CD8-positive, alpha-beta T cell (primary cell): ENCODE measurements at regions of chr4 and their contacts with region 1.

Region 1: GRCh38 chr4:142696334-142697122 is 149.6 kb downstream of the INPP4B start:
- DNase-seq: peak in 5 of 9 experiments; percentile 7 to 35 (median 19)
- ATAC-seq: peak; percentile 57
- H3K4me3 ChIP-seq: peak overlapping the region in 1 of 2 experiments; percentile 6
- H3K4me3 Mint-ChIP-seq: peak overlapping the region; percentile 65
- H3K27ac ChIP-seq: peak overlapping the region; percentile 14 to 27
- H3K27ac Mint-ChIP-seq: peak overlapping the region; percentile 95
- H3K4me1 ChIP-seq: peaks cover 57% of the 10 kb centered on the region
- H3K4me1 Mint-ChIP-seq: peaks cover 58% of the 10 kb centered on the region
- H3K27me3 ChIP-seq: no peaks in the 10 kb centered on the region
- H3K27me3 Mint-ChIP-seq: no peaks in the 10 kb centered on the region
- CTCF ChIP-seq: no peak

Region 2: GRCh38 chr4:142222127-142222526 is 474.4 kb before region 1 on chr4:
- CTCF ChIA-PET with region 1: no interaction called
- POLR2A ChIA-PET with region 1: no interaction called
- intact Hi-C with region 1: no loop called
- DNase-seq: no peak
- ATAC-seq: no peak
- H3K4me3 ChIP-seq: no peak overlapping the region
- H3K4me3 Mint-ChIP-seq: no peak overlapping the region
- H3K27ac ChIP-seq: no peak overlapping the region
- H3K27ac Mint-ChIP-seq: no peak overlapping the region
- H3K4me1 ChIP-seq: no peaks in the 10 kb centered on the region
- H3K4me1 Mint-ChIP-seq: peaks cover 16% of the 10 kb centered on the region
- H3K27me3 ChIP-seq: no peaks in the 10 kb centered on the region
- H3K27me3 Mint-ChIP-seq: no peaks in the 10 kb centered on the region
- CTCF ChIP-seq: no peak

Region 3: DNA sequence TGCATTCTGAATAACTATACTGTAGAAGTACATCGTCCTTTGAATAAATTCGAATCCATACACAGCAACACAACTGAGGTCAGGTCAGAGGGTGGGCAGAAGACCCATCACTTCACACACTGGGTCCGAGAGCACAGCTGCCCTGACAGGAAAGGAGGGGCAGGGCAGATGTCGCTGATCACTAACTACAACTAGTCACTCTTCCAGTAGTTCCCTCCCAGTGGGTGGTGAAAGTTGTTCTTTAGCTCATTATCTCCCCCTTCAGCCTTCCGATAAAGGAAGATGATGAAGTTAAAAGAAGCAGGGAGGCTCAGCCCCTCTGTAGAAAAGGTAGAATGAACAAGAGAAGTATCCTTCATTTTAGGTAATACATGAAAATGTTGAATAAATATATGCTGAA is 129.3 kb before region 1 on chr4:
- CTCF ChIA-PET with region 1: no interaction called
- POLR2A ChIA-PET with region 1: no interaction called
- intact Hi-C with region 1: loop called in 1 of 2 experiments (anchors 1 kb)
- DNase-seq: peak in 8 of 9 experiments; percentile 10 to 78 (median 37)
- ATAC-seq: peak; percentile 70
- H3K4me3 ChIP-seq: peak overlapping the region; percentile 17 to 45
- H3K4me3 Mint-ChIP-seq: peak overlapping the region; percentile 74
- H3K27ac ChIP-seq: peak overlapping the region; percentile 53 to 64
- H3K27ac Mint-ChIP-seq: peak overlapping the region; percentile 84
- H3K4me1 ChIP-seq: peaks cover 10% of the 10 kb centered on the region
- H3K4me1 Mint-ChIP-seq: peaks cover 29% of the 10 kb centered on the region
- H3K27me3 ChIP-seq: no peaks in the 10 kb centered on the region
- H3K27me3 Mint-ChIP-seq: no peaks in the 10 kb centered on the region
- CTCF ChIP-seq: no peak

Region 4: GRCh38 chr4:142579443-142579842 is 117.1 kb before region 1 on chr4:
- CTCF ChIA-PET with region 1: no interaction called
- POLR2A ChIA-PET with region 1: no interaction called
- intact Hi-C with region 1: no loop called
- DNase-seq: no peak
- ATAC-seq: no peak
- H3K4me3 ChIP-seq: no peak overlapping the region
- H3K4me3 Mint-ChIP-seq: no peak overlapping the region
- H3K27ac ChIP-seq: no peak overlapping the region
- H3K27ac Mint-ChIP-seq: no peak overlapping the region
- H3K4me1 ChIP-seq: no peaks in the 10 kb centered on the region
- H3K4me1 Mint-ChIP-seq: peaks cover 3% of the 10 kb centered on the region
- H3K27me3 ChIP-seq: no peaks in the 10 kb centered on the region
- H3K27me3 Mint-ChIP-seq: no peaks in the 10 kb centered on the region
- CTCF ChIP-seq: no peak

Region 5: DNA sequence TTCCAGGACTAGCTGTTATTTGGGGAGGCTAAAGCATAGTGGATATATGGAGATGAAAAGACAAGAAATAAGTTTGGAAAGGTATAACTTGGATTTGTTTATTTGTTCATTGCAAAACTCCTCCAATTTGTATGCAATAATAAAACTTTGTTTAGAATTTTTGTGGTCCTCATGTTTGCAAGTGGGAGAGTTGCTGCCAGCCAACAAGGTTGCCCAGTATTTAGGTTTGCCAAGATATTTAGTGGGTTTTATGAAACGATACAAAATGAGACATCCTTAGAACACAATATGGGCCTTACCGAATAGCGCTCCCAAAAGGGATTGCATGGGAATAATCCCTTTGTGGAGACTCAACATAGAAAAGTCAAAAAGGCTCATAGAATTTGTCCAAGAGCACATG is 12.5 kb before region 1 on chr4:
- CTCF ChIA-PET with region 1: interaction called, 3 read pairs
- POLR2A ChIA-PET with region 1: no interaction called
- intact Hi-C with region 1: loop called in 1 of 2 experiments (anchors 2 kb)
- DNase-seq: no peak
- ATAC-seq: no peak
- H3K4me3 ChIP-seq: no peak overlapping the region
- H3K4me3 Mint-ChIP-seq: no peak overlapping the region
- H3K27ac ChIP-seq: no peak overlapping the region
- H3K27ac Mint-ChIP-seq: no peak overlapping the region
- H3K4me1 ChIP-seq: no peaks in the 10 kb centered on the region
- H3K4me1 Mint-ChIP-seq: no peaks in the 10 kb centered on the region
- H3K27me3 ChIP-seq: no peaks in the 10 kb centered on the region
- H3K27me3 Mint-ChIP-seq: no peaks in the 10 kb centered on the region
- CTCF ChIP-seq: no peak

Region 6: DNA sequence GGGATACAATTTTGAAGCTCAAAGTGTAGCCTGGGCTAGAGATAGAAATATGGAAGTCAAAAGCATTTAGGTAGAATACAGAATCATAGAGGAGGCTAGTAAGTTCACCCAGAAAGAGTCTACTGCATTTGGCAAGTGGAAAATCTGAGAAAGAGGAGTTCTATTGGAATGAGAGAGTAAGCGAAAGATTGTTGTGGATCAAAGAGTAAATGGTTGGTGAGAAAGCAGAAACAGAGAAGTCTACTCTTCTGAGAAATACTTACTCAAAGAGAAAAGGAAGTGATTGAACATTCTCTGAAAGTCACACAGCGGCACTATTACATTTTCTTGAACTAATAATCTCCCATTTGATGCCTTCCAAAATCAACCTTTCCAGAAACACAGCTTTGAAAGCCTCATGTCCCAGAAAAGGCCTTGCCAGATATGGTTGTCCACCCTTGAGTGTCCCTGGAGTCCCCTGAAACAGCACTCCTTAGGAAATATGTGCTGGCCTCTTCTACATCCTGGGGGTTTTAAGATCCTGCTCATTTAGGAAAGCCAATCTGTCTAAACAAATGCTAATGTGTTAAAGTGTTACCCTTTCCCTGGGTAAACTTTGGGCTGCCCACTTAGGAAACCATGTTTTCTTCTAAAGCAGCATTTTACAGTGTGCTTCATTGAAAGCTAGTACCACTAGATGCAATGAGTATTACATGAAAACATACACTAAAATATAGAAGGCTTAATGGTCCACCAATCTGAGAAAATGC is 16.9 kb after region 1 on chr4:
- CTCF ChIA-PET with region 1: interaction called, 4 read pairs
- POLR2A ChIA-PET with region 1: no interaction called
- intact Hi-C with region 1: loop called in 1 of 2 experiments (anchors 2 kb)
- DNase-seq: no peak
- ATAC-seq: no peak
- H3K4me3 ChIP-seq: no peak overlapping the region
- H3K4me3 Mint-ChIP-seq: no peak overlapping the region
- H3K27ac ChIP-seq: no peak overlapping the region
- H3K27ac Mint-ChIP-seq: peak overlapping the region; percentile 25
- H3K4me1 ChIP-seq: peaks cover 13% of the 10 kb centered on the region
- H3K4me1 Mint-ChIP-seq: peaks cover 37% of the 10 kb centered on the region
- H3K27me3 ChIP-seq: no peaks in the 10 kb centered on the region
- H3K27me3 Mint-ChIP-seq: no peaks in the 10 kb centered on the region
- CTCF ChIP-seq: no peak